CD8-positive, alpha-beta T cell (primary cell): ENCODE measurements at regions of chr19 and their contacts with region 1.

Region 1: DNA sequence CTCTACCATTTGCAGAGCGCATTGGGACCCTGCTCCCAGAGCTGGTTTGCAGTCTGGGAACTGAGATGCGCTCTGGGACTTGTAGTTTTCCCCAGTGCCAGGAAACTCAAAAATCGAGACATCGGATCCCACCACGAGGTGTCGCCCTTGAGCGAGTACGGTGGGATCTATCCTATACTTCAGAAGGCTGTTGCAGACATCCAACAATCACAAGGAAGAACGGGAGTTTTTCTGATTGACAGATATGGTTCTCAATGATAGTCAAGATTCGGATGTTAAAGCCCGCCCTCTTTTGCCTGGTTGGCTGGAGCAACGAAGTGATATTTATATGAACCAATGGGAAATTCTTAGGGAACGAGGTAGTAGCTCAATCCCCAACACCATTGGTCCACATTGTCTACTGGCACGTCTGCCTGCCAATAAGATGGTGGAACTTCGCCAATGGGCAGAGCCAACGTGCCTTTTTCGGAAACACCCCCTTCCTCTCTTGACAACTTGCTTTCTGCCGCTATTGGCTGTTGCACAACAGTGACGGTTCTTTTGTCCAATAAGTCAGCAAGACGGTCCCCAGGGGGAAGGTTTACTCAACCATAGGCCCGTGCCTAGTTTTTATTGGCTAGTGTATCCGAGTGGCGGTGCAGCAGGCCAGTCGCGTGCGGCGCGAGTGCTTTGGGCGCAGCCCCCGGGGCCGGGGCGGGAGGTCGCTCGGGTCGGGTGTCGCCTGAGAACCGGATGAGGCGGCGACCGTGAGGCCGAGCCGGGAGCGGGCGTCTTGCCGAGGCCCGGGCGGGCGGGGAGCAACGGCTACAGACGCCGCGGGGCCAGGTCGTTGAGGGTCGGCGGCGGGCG is at the start of gene DNM2:
- DNase-seq: peak; percentile 92 to 100 (median 97)
- ATAC-seq: peak; percentile 84
- H3K4me3 ChIP-seq: peak within 1 kb of the TSS; percentile 79 to 90
- H3K4me3 Mint-ChIP-seq: peak within 1 kb of the TSS; percentile 95
- H3K27ac ChIP-seq: peak within 1 kb of the TSS; percentile 71 to 81
- H3K27ac Mint-ChIP-seq: peak within 1 kb of the TSS; percentile 92
- H3K4me1 ChIP-seq: peaks cover 38% of the 10 kb centered on the region
- H3K4me1 Mint-ChIP-seq: peaks cover 42% of the 10 kb centered on the region
- H3K27me3 ChIP-seq: no peaks in the 10 kb centered on the region
- H3K27me3 Mint-ChIP-seq: no peaks in the 10 kb centered on the region
- CTCF ChIP-seq: peak; percentile 64
- total RNA-seq, gene DNM2: 309 to 337 TPM

Region 2: DNA sequence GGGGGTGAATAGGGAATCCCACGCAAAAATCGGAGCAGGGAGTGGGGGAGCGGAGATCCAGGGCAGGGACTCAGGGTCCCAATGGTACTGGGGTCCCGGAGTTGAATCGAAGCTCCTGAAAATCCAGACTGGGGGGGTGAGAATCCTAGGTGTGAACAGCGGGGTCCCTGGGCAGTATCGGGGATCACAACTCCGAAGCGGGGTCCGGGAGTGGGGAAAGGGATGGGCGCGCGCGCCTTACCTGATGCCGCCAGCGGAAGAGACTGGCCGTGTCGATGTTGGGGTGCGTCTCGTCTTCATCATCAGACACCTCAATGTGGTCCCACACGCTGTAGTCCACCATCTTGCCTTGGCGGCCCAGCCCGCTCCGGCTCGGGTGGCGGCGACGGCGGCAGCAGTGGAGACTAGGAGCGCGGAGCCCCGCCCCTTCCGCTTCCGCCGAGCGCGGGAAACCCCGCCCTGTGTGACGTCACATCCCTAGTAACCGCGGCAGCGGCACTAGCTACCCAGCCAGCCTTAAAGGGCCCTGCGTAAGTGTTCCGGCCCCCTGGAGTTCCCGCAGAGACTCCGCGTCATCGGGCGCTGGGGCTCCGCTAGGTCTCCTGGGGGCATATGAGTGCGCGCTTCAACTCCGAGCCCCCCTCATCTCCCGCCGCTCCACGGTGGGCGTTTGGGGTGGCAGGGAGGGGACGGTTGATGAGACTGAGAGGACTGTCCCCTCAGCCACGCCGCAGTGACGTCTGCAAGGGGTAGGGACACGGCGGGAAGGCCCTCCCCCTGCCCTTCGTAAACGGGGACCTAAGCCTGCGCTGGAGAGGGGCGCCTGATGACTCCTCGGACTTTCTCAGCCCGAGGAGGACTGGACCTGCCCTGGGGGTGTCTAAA is 314.2 kb before region 1 on chr19 and contains the start of gene CDC37:
- CTCF ChIA-PET with region 1: interaction called, 3 read pairs
- POLR2A ChIA-PET with region 1: no interaction called
- intact Hi-C with region 1: loop called in 1 of 2 experiments (anchors 5 kb)
- DNase-seq: peak; percentile 96 to 99 (median 98)
- ATAC-seq: peak; percentile 72
- H3K4me3 ChIP-seq: peak within 1 kb of the TSS; percentile 92 to 99
- H3K4me3 Mint-ChIP-seq: peak within 1 kb of the TSS; percentile 95
- H3K27ac ChIP-seq: peak within 1 kb of the TSS; percentile 93 to 95
- H3K27ac Mint-ChIP-seq: peak within 1 kb of the TSS; percentile 94
- H3K4me1 ChIP-seq: peaks cover 73% of the 10 kb centered on the region
- H3K4me1 Mint-ChIP-seq: peaks cover 67% of the 10 kb centered on the region
- H3K27me3 ChIP-seq: peaks cover 0 to 3% of the 10 kb centered on the region in 2 experiments
- H3K27me3 Mint-ChIP-seq: no peaks in the 10 kb centered on the region
- CTCF ChIP-seq: no peak
- total RNA-seq, gene CDC37: 195 to 196 TPM

Region 3: GRCh38 chr19:10502524-10503001 is 215.0 kb before region 1 on chr19:
- CTCF ChIA-PET with region 1: no interaction called
- POLR2A ChIA-PET with region 1: no interaction called
- intact Hi-C with region 1: no loop called
- DNase-seq: peak; percentile 74 to 93 (median 87)
- ATAC-seq: peak; percentile 90
- H3K4me3 ChIP-seq: peak overlapping the region; percentile 83 to 96
- H3K4me3 Mint-ChIP-seq: peak overlapping the region; percentile 83
- H3K27ac ChIP-seq: peak overlapping the region; percentile 73 to 75
- H3K27ac Mint-ChIP-seq: peak overlapping the region; percentile 71
- H3K4me1 ChIP-seq: peaks cover 11% of the 10 kb centered on the region
- H3K4me1 Mint-ChIP-seq: peaks cover 31% of the 10 kb centered on the region
- H3K27me3 ChIP-seq: no peaks in the 10 kb centered on the region
- H3K27me3 Mint-ChIP-seq: no peaks in the 10 kb centered on the region
- CTCF ChIP-seq: no peak

Region 4: DNA sequence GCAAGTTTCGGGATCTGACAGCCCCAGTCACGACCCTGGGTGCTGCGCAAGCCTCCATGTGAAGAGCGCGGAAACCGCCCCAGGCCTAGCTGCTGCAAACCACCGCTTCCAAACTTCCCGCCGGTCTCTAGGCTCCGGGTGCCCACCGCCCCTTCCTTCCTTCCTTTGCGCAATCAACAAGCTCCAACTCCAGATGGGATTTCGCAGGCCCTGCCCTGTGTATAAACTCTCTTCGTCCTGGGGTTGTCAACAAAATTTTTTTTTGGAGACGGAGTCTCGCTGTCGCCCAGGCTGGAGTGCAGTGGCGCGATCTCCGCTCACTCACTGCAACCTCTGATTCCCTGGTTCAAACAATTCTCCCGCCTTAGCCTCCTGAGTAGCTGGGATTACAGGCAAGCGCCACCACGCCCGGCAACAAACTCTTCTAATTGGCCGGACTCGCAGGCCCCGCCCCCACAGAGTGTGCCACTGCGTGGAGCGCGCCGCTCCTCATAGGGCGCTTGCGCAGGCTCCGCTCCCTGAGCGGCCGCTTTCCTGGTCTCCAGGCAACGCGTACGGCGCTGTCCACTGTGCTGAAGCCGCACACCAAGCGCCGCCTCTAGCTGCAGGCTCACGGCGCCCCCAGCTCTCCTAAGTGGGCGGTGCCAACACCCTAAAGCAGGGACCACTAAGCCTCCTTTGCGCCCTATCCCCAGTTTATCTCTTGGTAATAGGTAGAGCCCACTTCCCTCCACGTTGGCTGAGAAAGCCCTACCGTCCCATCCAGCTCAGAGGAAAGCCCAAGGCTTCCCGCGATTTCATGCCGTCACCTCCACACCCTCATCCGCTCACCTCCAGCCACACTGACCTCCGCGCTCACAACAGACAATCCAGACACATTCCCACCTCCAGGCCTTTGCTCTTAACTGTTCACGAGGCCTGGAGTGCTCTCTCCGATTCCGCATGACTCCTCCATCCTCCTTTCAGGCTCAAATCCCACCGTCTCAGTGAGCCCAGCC is 21.9 kb before region 1 on chr19:
- CTCF ChIA-PET with region 1: interaction called, 40 read pairs
- POLR2A ChIA-PET with region 1: interaction called, 5 read pairs
- intact Hi-C with region 1: loop called in 1 of 2 experiments (anchors 1 kb)
- DNase-seq: peak; percentile 77 to 94 (median 87)
- ATAC-seq: peak; percentile 97
- H3K4me3 ChIP-seq: peak overlapping the region; percentile 33 to 58
- H3K4me3 Mint-ChIP-seq: peak overlapping the region; percentile 78
- H3K27ac ChIP-seq: no peak overlapping the region
- H3K27ac Mint-ChIP-seq: no peak overlapping the region
- H3K4me1 ChIP-seq: peaks cover 12% of the 10 kb centered on the region
- H3K4me1 Mint-ChIP-seq: peaks cover 17% of the 10 kb centered on the region
- H3K27me3 ChIP-seq: peaks cover 0 to 2% of the 10 kb centered on the region in 2 experiments
- H3K27me3 Mint-ChIP-seq: peaks cover 5% of the 10 kb centered on the region
- CTCF ChIP-seq: no peak

Region 5: DNA sequence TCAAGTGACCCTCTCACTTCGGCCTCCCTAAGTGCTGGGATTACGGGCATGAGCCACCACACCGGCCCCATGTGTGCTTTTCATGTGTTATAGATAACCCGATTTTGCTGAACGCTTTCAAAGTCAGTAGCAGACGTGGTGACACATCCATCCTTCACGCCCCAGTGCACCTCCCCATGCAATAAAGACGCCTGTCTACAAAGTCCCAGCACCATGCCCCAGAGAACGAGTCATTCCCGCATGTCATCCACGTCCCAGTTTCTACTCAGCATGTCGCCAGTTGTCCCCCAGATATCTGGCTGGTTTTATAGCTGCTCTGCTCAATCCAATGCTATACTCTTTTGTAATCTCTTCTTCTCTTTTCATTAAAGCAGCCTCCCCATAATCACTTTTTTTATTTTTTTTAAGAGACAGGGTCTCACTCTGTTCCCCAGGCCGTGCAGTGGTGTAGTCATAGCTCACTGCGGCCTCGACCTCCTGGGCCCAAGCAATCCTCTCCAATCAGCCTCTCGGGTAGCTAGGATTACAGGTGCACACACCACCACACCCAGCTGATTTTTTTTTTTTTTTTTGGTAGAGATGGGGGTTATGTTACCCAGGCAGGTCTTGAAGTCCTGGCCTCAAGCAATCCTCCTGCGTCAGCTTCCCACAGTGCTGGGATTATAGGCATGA is 42.8 kb after region 1 on chr19:
- CTCF ChIA-PET with region 1: interaction called, 48 read pairs
- POLR2A ChIA-PET with region 1: interaction called, 13 read pairs
- intact Hi-C with region 1: loop called (anchors 1 kb)
- DNase-seq: peak in 5 of 9 experiments; percentile 36 to 67 (median 54)
- ATAC-seq: peak; percentile 30
- H3K4me3 ChIP-seq: peak overlapping the region in 1 of 2 experiments; percentile 39
- H3K4me3 Mint-ChIP-seq: peak overlapping the region; percentile 66
- H3K27ac ChIP-seq: peak overlapping the region; percentile 43 to 74
- H3K27ac Mint-ChIP-seq: peak overlapping the region; percentile 95
- H3K4me1 ChIP-seq: peaks cover 81% of the 10 kb centered on the region
- H3K4me1 Mint-ChIP-seq: peaks cover 82% of the 10 kb centered on the region
- H3K27me3 ChIP-seq: no peaks in the 10 kb centered on the region
- H3K27me3 Mint-ChIP-seq: no peaks in the 10 kb centered on the region
- CTCF ChIP-seq: no peak

Region 6: DNA sequence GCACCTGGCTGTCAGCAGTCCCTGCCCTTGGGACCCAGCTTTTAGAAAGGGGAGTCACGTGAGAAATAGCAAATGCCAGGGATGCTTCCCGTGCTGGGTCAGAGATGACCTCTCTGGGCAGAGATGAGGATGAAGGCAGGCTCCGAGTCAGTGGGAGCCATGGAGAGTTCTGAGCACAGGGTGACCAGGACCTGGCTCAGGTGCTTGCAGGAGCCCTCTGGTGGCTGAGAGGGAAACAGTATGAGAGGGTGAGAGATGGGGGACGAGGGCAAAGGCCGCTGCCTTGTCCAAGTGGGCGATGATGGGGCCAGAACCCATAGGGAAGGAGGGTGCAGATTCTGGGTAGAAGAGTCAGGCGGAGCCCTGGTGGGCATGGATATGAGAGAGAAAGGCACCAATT is 102.6 kb after region 1 on chr19:
- CTCF ChIA-PET with region 1: interaction called, 17 read pairs
- POLR2A ChIA-PET with region 1: interaction called, 5 read pairs
- intact Hi-C with region 1: no loop called
- DNase-seq: peak in 1 of 9 experiments; percentile 23
- ATAC-seq: no peak
- H3K4me3 ChIP-seq: no peak overlapping the region
- H3K4me3 Mint-ChIP-seq: no peak overlapping the region
- H3K27ac ChIP-seq: no peak overlapping the region
- H3K27ac Mint-ChIP-seq: no peak overlapping the region
- H3K4me1 ChIP-seq: no peaks in the 10 kb centered on the region
- H3K4me1 Mint-ChIP-seq: no peaks in the 10 kb centered on the region
- H3K27me3 ChIP-seq: no peaks in the 10 kb centered on the region
- H3K27me3 Mint-ChIP-seq: no peaks in the 10 kb centered on the region
- CTCF ChIP-seq: no peak

Region 7: GRCh38 chr19:10864538-10864899 is 146.9 kb after region 1 on chr19:
- CTCF ChIA-PET with region 1: interaction called, 64 read pairs
- POLR2A ChIA-PET with region 1: interaction called, 16 read pairs
- intact Hi-C with region 1: loop called (anchors 1 kb)
- DNase-seq: peak; percentile 57 to 87 (median 82)
- ATAC-seq: peak; percentile 95
- H3K4me3 ChIP-seq: no peak overlapping the region
- H3K4me3 Mint-ChIP-seq: no peak overlapping the region
- H3K27ac ChIP-seq: no peak overlapping the region
- H3K27ac Mint-ChIP-seq: no peak overlapping the region
- H3K4me1 ChIP-seq: peaks cover 10% of the 10 kb centered on the region
- H3K4me1 Mint-ChIP-seq: peaks cover 6% of the 10 kb centered on the region
- H3K27me3 ChIP-seq: no peaks in the 10 kb centered on the region
- H3K27me3 Mint-ChIP-seq: no peaks in the 10 kb centered on the region
- CTCF ChIP-seq: peak; percentile 74